ENCODE measurements at regions of chr9 and their contacts with region 1.

Region 1: DNA sequence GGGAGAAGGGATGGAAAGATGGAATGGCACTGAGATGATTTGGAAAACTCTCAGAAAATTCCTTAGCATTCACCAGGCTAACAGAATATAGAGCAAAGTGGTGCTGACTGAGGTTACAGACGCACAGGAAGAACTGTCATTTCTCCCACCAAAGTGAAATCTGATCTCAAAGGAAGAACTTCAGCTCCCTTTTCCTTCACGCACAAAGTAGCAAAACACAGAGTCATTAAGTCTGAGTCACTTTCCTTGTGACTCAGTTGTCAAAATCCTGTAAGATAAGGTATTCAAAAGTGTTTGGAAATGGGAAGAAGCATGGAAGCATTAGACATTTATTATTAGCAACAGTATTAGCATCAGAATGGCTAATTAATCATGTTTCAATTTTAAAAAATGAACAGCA is 11.7 kb downstream of the MPDZ start:
- DNase-seq: peak; percentile 11 to 24
- ATAC-seq: peak in 1 of 2 experiments; percentile 58; a peak in 3 of 6 replicates
- H3K4me3 ChIP-seq: no peak overlapping the region; the same call in 2 of the 3 replicates
- H3K27ac ChIP-seq: peak overlapping the region in 1 of 2 experiments; percentile 38; a peak in 2 of 6 replicates
- H3K4me1 ChIP-seq: peaks cover 29% of the 10 kb centered on the region
- CTCF ChIP-seq: no peak
- EP300 ChIP-seq: no peak
- POLR2A ChIP-seq: no peak
- RAD21 ChIP-seq: no peak

Region 2: DNA sequence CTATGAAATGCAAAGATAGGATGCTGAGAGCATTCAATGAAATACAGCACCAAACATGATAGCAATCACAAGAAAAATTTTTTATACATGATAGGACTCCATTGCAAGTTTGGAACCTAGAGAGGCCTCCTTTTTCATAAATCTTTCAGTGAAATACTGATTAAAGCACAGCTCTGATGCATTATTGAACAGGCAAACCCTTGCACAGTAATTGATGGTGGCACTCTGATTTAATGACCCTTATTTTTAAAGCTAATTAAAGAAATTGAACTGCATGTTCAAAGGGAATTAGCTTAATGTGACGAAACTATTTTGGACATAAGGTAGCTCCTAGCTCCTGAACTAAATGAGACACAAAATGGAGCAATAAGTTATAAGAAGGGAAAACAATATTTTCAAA is 32.8 kb before region 1 on chr9:
- CTCF ChIA-PET with region 1: no interaction called
- POLR2A ChIA-PET with region 1: interaction called, 19 read pairs
- DNase-seq: no peak
- ATAC-seq: no peak
- H3K4me3 ChIP-seq: no peak overlapping the region
- H3K27ac ChIP-seq: no peak overlapping the region
- H3K4me1 ChIP-seq: no peaks in the 10 kb centered on the region
- CTCF ChIP-seq: no peak
- EP300 ChIP-seq: no peak
- POLR2A ChIP-seq: no peak
- RAD21 ChIP-seq: no peak

Region 3: GRCh38 chr9:13278368-13279246 is 10.9 kb after region 1 on chr9:
- CTCF ChIA-PET with region 1: no interaction called
- POLR2A ChIA-PET with region 1: no interaction called
- DNase-seq: peak; percentile 53 to 71
- ATAC-seq: peak; percentile 72 to 83
- H3K4me3 ChIP-seq: peak overlapping the region; percentile 77
- H3K27ac ChIP-seq: peak overlapping the region; percentile 95 to 96
- H3K4me1 ChIP-seq: peaks cover 26% of the 10 kb centered on the region
- CTCF ChIP-seq: no peak
- EP300 ChIP-seq: no peak
- POLR2A ChIP-seq: peak; percentile 4; the same call in 1 of the 2 replicates
- RAD21 ChIP-seq: 0 out of 5 replicates have a peak, but pooled peaks of 1 of the 2 experiments have one; percentile 24

Measured in A549 (cell line).